ENCODE measurements at regions of chr5 and their contacts with region 1.

Region 1: DNA sequence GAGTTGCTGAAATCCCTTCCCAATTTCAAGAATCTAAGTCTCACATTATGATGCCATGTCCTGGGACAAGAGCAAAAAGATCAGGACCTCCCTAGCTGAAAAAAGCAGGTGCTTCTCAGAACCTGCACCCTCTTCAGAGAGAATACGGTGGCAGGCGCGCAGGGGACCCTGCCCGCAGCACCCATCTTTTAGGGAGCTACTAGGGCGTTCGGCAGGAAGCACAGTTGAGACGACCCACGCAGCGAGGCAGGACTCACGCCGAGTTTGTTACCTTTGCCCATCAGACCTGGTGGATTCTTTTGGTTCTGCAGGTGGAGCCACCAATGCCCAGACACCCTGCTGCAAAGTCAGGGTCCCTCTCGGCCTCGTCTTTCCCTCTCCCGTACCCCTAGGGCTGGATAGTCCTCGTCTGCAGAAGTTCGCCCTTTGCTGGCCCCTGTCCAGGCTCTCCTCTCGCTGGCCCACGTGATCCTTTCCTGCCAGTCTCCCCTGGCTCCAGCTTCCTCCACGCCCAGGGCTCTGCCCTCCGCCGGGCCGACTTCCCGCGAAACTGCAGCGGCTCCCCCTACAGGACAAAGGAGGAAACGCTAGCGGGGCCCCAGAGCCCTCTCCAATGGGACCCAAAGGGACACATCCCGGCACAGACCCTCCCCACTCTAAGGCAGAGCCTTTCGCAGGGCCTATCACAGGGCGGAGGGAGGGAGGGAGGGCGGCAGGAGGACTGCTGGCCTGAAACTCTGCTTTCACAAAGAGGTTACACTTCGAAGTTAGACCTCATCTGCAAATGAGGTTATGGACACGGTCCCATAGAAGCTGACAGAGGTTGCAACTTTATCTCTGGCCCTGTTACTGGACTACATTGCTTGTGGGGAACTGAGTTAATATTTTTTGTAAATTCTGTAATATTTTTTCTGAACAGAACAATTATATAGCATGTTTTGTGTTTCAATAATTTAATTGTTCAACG is 28.8 kb downstream of the TMEM174 start:
- DNase-seq: peak; percentile 73 to 86 (median 84)
- H3K4me3 ChIP-seq: no peak overlapping the region
- H3K27ac ChIP-seq: no peak overlapping the region
- H3K4me1 ChIP-seq: no peaks in the 10 kb centered on the region
- H3K27me3 ChIP-seq: peaks cover 13% of the 10 kb centered on the region
- CTCF ChIP-seq: peak; percentile 58 to 85 (median 74)
- POLR2A ChIP-seq: no peak

Region 2: GRCh38 chr5:72752909-72753308 is 448.9 kb before region 1 on chr5:
- intact Hi-C with region 1: no loop called
- DNase-seq: no peak
- H3K4me3 ChIP-seq: no peak overlapping the region
- H3K27ac ChIP-seq: no peak overlapping the region
- H3K4me1 ChIP-seq: no peaks in the 10 kb centered on the region
- H3K27me3 ChIP-seq: no peaks in the 10 kb centered on the region
- CTCF ChIP-seq: peak in 1 of 6 experiments; percentile 6
- POLR2A ChIP-seq: no peak

Region 3: DNA sequence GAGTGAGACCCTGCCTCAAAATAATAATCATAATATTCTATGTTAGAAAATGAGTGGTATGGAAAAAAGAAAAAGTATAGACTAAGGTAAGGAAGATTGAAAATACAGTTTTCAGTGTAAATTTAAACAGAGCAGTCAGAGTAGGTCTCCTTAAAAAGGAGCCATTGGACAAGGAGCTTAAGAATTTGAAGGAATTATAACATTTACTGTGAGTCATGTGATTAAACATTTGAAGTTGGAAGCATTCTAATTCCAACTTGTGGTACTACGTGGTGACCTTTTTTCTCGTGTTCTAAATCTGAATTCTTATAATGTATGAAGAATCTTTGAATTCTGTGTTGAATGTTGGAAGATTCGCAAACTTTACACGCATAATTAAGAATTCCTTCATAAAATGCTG is 120.7 kb before region 1 on chr5:
- intact Hi-C with region 1: loop called (anchors 5 to 10 kb)
- DNase-seq: no peak
- H3K4me3 ChIP-seq: no peak overlapping the region
- H3K27ac ChIP-seq: no peak overlapping the region
- H3K4me1 ChIP-seq: no peaks in the 10 kb centered on the region
- H3K27me3 ChIP-seq: no peaks in the 10 kb centered on the region
- CTCF ChIP-seq: no peak
- POLR2A ChIP-seq: no peak

Region 4: GRCh38 chr5:73088026-73088425 is 113.8 kb before region 1 on chr5:
- intact Hi-C with region 1: loop called (anchors 5 to 10 kb)
- DNase-seq: no peak
- H3K4me3 ChIP-seq: no peak overlapping the region
- H3K27ac ChIP-seq: no peak overlapping the region
- H3K4me1 ChIP-seq: no peaks in the 10 kb centered on the region
- H3K27me3 ChIP-seq: no peaks in the 10 kb centered on the region
- CTCF ChIP-seq: no peak
- POLR2A ChIP-seq: no peak